ENCODE measurements at regions of chr3 and their contacts with region 1.

Region 1: DNA sequence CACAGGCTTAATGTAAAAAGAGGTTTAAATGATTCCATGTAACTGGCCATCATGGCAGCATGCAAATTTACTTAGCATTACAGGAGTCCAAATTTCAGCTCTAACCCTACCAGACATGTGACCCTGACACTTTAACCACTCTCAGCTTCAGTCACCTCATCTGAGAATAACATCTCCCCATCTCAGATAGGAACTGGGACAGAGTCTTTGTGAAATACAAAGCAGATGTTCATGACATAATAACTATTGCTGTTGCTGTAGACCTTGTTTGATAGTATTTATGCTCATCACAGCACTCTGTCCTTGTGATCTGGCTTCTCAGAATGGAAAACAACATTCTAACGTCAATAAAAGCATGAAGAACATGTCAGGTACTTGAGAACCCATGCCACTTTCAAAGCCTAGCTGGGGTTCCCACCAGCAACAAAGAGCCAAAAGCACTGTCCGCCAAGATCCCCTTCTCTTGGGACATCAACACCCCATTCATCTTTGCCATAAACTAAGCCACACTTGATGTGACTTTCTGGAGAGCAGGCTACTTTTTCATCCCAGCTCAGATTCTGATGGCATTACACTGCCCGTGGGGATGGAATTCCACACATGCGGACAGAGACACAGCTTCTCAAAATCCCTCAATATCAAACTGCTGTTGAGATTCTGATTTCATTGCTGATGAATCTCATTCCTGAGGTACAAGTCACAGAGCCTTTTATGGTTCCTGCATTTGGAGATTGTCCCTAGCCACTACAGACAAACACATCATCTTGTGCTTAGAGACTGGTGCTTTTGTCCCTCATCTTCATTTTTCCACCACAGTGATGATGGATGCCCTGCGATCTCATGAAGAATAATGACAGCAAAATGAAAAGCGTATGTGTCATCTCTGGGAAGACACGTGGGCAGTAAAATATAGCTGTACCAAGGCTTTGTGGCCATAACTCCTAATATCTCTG is 202.7 kb downstream of the TNIK start:
- DNase-seq: peak; percentile 76
- ATAC-seq: peak; percentile 74
- H3K4me3 ChIP-seq: peak overlapping the region; percentile 31; the same call in 1 of the 2 replicates
- H3K27ac ChIP-seq: peak overlapping the region; percentile 87
- H3K4me1 ChIP-seq: peaks cover 86% of the 10 kb centered on the region
- H3K27me3 ChIP-seq: no peaks in the 10 kb centered on the region
- CTCF ChIP-seq: no peak
- EP300 ChIP-seq: peak in 1 of 2 experiments; percentile 63; a peak in 2 of 4 replicates
- POLR2A ChIP-seq: no peak
- RAD21 ChIP-seq: 0 out of 2 replicates have a peak, but pooled peaks have one; percentile 10

Region 2: DNA sequence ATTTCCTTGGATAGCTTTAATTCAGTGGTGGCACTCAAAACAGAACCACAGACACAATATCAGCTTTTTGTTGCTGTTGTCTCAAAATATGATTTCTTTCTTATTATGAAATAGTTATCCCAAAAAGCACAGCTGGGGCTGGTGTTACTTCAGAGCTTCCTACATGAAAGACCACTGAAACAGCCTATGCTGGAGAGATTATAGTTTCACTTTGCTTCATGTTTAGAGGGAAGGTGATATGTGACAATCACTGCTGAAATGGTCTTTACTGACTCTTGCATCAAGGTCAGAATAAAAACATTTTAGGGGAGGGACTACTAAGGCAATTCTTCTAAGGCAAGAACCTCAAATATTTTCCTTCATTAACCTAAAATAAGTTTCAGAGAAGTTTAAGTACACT is 12.0 kb after region 1 on chr3:
- CTCF ChIA-PET with region 1: interaction called, 42 read pairs
- POLR2A ChIA-PET with region 1: interaction called, 14 read pairs
- RAD21 ChIA-PET with region 1: interaction called, 68 read pairs
- SMC1A ChIA-PET with region 1: interaction called, 657 read pairs
- in situ Hi-C with region 1: no loop called
- intact Hi-C with region 1: no loop called
- DNase-seq: no peak
- ATAC-seq: peak; percentile 54
- H3K4me3 ChIP-seq: no peak overlapping the region
- H3K27ac ChIP-seq: peak overlapping the region; percentile 80
- H3K4me1 ChIP-seq: peaks cover 72% of the 10 kb centered on the region
- H3K27me3 ChIP-seq: no peaks in the 10 kb centered on the region
- CTCF ChIP-seq: no peak
- EP300 ChIP-seq: no peak
- POLR2A ChIP-seq: no peak
- RAD21 ChIP-seq: no peak

Region 3: GRCh38 chr3:171277456-171278298 is 20.1 kb after region 1 on chr3:
- CTCF ChIA-PET with region 1: interaction called, 42 read pairs
- POLR2A ChIA-PET with region 1: interaction called, 37 read pairs
- RAD21 ChIA-PET with region 1: interaction called, 81 read pairs
- SMC1A ChIA-PET with region 1: interaction called, 657 read pairs
- in situ Hi-C with region 1: no loop called
- intact Hi-C with region 1: no loop called
- DNase-seq: no peak
- ATAC-seq: peak; percentile 27
- H3K4me3 ChIP-seq: no peak overlapping the region
- H3K27ac ChIP-seq: peak overlapping the region; percentile 13; the same call in 1 of the 2 replicates
- H3K4me1 ChIP-seq: peaks cover 45% of the 10 kb centered on the region
- H3K27me3 ChIP-seq: no peaks in the 10 kb centered on the region
- CTCF ChIP-seq: peak in 1 of 3 experiments; percentile 7; a peak in 1 of 6 replicates
- EP300 ChIP-seq: no peak
- POLR2A ChIP-seq: no peak
- RAD21 ChIP-seq: no peak

Region 4: DNA sequence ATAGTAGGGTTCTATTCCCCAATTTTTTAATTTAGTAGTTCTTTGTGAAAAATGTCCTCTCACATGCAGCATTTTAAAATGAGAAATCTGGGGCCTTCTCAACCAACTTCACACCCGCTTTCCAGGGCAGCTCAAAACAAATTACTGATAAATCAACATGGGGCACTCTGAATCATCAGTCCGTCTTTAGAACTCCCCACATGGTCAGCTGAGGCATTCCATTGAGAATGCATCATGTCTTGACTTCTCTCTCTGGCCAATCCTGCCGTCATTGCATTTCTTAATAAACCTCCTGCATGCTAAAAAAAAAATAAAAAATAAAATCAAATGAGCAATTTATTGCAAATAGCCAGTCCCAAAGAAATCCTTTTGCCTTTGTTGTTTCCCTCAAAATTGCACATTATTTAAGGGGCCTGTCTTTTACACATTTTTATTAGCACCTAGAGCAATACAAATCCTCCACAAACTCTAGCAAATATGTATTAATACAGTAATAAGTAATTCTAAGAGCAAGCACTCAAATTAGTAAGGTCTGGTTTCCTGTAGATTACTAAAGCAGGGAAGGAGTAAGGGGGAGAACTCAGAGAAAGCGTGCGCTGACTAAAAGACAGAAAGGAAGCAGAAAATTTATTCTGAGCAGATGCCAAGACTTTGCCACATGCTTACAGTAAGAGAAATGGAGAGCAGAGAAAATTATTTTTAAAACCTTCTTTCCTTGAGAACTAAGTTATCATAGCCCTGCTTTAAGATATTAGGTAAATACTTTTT is 27.0 kb after region 1 on chr3:
- CTCF ChIA-PET with region 1: interaction called, 5 read pairs
- POLR2A ChIA-PET with region 1: interaction called, 37 read pairs
- RAD21 ChIA-PET with region 1: interaction called, 81 read pairs
- SMC1A ChIA-PET with region 1: interaction called, 657 read pairs
- in situ Hi-C with region 1: no loop called
- intact Hi-C with region 1: loop called (anchors 1 kb)
- DNase-seq: peak; percentile 76
- ATAC-seq: peak; percentile 64
- H3K4me3 ChIP-seq: peak overlapping the region; percentile 36; the same call in 1 of the 2 replicates
- H3K27ac ChIP-seq: peak overlapping the region; percentile 96
- H3K4me1 ChIP-seq: peaks cover 61% of the 10 kb centered on the region
- H3K27me3 ChIP-seq: no peaks in the 10 kb centered on the region
- CTCF ChIP-seq: no peak
- EP300 ChIP-seq: peak in 1 of 2 experiments; percentile 21; a peak in 1 of 4 replicates
- POLR2A ChIP-seq: no peak
- RAD21 ChIP-seq: no peak

Region 5: GRCh38 chr3:171293142-171293782 is 35.7 kb after region 1 on chr3:
- CTCF ChIA-PET with region 1: interaction called, 4 read pairs
- POLR2A ChIA-PET with region 1: interaction called, 6 read pairs
- RAD21 ChIA-PET with region 1: interaction called, 22 read pairs
- SMC1A ChIA-PET with region 1: interaction called, 10 read pairs
- in situ Hi-C with region 1: no loop called
- intact Hi-C with region 1: no loop called
- DNase-seq: no peak
- ATAC-seq: peak; percentile 67
- H3K4me3 ChIP-seq: no peak overlapping the region
- H3K27ac ChIP-seq: peak overlapping the region; percentile 60
- H3K4me1 ChIP-seq: peaks cover 60% of the 10 kb centered on the region
- H3K27me3 ChIP-seq: no peaks in the 10 kb centered on the region
- CTCF ChIP-seq: no peak
- EP300 ChIP-seq: 0 out of 4 replicates have a peak, but pooled peaks have one; percentile 7 to 22
- POLR2A ChIP-seq: no peak
- RAD21 ChIP-seq: no peak

Region 6: DNA sequence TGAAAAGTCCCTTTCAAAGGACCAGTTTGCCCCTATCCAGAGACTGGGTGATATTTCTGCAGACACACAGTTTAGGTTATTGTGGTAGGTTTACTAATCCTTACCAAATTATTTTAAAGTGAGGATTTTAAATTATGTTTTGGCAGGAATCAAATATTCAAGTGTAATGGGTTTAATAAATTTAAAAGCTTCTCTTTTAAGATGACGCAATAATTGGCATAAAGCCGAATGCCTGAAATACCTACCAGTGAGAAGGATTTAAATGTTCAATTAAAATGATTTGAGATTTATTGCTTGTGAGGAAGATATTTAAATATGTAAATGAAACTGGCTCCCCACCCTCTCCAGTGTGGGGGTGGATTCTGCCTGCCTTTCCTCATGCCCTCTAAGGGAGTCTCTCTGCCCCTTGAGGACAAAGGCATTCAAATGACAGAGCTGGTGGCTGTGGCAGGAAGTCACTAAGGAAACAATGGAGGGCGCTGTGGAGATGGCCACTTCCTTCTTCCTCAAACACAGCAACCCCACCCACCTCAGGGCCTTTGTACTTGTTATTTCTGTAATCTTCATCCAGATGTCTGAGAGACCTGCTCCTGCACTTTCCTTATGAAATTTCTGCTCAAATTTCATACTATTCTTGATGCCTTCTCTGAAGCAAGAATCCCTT is 71.0 kb after region 1 on chr3:
- CTCF ChIA-PET with region 1: no interaction called
- POLR2A ChIA-PET with region 1: interaction called, 3 read pairs
- RAD21 ChIA-PET with region 1: interaction called, 4 read pairs
- SMC1A ChIA-PET with region 1: interaction called, 16 read pairs
- in situ Hi-C with region 1: no loop called
- intact Hi-C with region 1: no loop called
- DNase-seq: no peak
- ATAC-seq: peak; percentile 60
- H3K4me3 ChIP-seq: no peak overlapping the region
- H3K27ac ChIP-seq: peak overlapping the region; percentile 6
- H3K4me1 ChIP-seq: peaks cover 38% of the 10 kb centered on the region
- H3K27me3 ChIP-seq: no peaks in the 10 kb centered on the region
- CTCF ChIP-seq: peak; percentile 27 to 36 (median 28); a peak in 4 of 6 replicates
- EP300 ChIP-seq: no peak
- POLR2A ChIP-seq: no peak
- RAD21 ChIP-seq: no peak

Measured in GM12878 (cell line).